Activated T-helper 1 cell treated with anti-CD3 and anti-CD28 coated beads, Interleukin-12 subunit alpha, Interleukin-12 subunit beta, Interleukin-2, Interleukin-4 antibody, amounts not matched to agents 30 ng/mL and 10 ng/mL and 1 ng/mL, durations not matched to agents 14 hours and 24 hours and 36 hours (primary cell): ENCODE measurements at regions of chr11 and their contacts with region 1.

Region 1: DNA sequence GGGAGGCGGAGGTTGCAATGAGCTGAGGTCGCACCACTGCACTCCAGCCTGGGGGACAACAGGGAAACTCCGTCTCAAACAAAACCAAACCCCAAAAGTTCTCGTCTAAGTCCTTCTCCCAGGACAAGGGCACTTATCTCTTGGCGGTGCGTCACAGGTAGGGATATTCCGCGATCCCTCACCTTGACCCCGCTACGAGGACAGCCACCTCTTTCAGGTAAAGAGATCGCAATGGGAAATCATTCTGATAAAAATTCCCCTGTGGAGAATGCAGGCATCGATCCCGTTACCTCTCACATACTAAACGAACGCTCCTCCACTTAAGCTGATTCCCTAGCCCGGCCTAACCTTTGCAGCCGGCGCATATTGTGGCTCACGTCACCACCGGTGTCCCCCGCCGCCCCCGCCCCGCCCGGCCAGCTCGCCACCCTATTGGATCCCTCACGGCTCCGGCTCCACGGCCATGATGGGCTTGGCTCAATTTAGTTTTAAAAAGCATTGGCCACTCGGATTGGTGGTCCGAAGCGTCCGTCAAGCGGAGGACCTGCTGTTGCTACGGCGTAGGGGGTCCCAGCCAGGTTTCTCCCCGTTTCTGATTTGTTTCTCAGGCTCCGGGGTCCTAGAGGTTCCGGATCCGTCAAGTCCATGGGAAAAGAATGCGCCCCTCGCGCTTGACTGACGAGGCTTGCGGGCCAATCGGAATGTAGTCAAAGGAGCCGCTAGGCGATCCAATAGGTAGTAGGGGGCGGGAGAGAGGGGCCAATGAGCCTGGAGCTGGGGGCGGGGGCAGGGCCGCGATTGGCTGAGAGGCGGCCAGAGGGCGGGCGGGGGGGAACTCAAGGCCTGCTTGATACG is 439 bp upstream of the PPP6R3 start:
- DNase-seq: peak; percentile 90
- H3K4me3 Mint-ChIP-seq: peak overlapping the region; percentile 86
- H3K27ac Mint-ChIP-seq: peak overlapping the region; percentile 91
- H3K4me1 Mint-ChIP-seq: peaks cover 29% of the 10 kb centered on the region
- H3K27me3 Mint-ChIP-seq: peaks cover 3% of the 10 kb centered on the region

Region 2: DNA sequence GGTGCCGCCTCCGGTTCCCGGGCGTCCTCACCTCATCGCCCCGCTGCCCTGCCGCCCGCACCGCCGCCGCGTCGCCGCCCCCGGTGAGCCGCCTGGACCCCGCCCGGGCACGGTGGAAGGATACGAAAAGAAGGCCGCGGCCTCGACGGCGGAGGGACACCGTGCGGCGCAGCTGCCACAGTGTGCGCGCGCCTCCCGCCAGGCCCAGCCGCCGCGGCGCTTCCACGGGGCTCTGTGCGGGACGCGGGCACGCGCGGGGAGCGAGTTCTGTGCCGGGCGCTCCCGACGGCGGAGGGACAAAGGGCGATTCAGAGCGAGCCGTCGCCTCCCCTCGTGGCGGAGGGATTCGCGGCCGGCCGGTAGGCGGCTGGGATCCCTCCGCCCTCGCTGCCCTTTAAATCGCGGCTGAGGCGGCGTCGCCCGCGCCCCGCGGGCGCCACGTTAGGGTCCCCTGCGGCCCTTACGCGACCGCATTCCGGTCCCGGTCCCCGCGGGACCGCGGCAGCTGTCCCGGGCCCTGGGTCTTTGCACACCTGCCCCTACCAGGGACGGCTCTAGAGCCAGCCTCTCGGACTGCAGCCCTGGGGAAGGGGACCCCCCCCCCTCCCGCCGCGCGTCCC is 246.4 kb before region 1 on chr11:
- intact Hi-C with region 1: loop called (anchors 5 kb)
- DNase-seq: peak; percentile 76
- H3K4me3 Mint-ChIP-seq: peak overlapping the region; percentile 64
- H3K27ac Mint-ChIP-seq: no peak overlapping the region
- H3K4me1 Mint-ChIP-seq: peaks cover 44% of the 10 kb centered on the region
- H3K27me3 Mint-ChIP-seq: peaks cover 20% of the 10 kb centered on the region

Region 3: DNA sequence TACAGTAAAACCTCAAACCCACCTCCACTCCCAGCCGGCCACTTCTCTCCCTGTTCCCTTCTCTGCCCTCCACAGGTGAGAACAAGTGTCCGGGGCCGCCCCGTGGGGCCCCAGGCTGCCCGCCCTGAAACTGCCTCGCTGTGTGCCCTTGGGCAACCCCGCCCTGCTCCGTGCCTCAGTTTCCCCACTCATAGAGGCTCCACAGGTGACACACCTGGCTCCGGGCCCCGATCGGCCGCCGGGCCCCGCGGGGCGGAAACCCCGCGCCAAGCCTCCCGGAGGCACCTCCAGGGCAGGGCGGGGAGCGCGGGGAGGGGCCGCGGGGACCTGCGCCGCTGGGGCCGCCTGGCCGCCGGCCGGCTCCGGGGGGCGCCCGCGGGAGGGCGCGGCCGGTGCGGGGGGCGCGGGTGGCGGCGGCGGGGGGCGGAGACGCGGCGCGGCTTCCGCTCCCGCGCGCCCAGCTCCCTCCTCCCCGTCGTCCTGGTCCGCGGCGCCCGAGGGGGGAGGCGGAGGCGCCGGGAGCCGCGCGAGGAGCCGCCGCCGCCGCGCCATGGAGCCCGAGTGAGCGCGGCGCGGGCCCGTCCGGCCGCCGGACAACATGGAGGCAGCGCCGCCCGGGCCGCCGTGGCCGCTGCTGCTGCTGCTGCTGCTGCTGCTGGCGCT is 147.9 kb before region 1 on chr11 and contains the start of gene LRP5:
- intact Hi-C with region 1: loop called (anchors 1 kb)
- DNase-seq: no peak
- H3K4me3 Mint-ChIP-seq: peak within 1 kb of the TSS; percentile 87
- H3K27ac Mint-ChIP-seq: peak within 1 kb of the TSS; percentile 79
- H3K4me1 Mint-ChIP-seq: peaks cover 48% of the 10 kb centered on the region
- H3K27me3 Mint-ChIP-seq: peaks cover 7% of the 10 kb centered on the region
- total RNA-seq, gene LRP5: 21.4 and 23.9 TPM in 2 replicates

Region 4: GRCh38 chr11:68338051-68338780 is 121.9 kb before region 1 on chr11:
- intact Hi-C with region 1: no loop called
- DNase-seq: no peak
- H3K4me3 Mint-ChIP-seq: peak overlapping the region; percentile 16
- H3K27ac Mint-ChIP-seq: peak overlapping the region; percentile 5
- H3K4me1 Mint-ChIP-seq: peaks cover 67% of the 10 kb centered on the region
- H3K27me3 Mint-ChIP-seq: no peaks in the 10 kb centered on the region

Region 5: DNA sequence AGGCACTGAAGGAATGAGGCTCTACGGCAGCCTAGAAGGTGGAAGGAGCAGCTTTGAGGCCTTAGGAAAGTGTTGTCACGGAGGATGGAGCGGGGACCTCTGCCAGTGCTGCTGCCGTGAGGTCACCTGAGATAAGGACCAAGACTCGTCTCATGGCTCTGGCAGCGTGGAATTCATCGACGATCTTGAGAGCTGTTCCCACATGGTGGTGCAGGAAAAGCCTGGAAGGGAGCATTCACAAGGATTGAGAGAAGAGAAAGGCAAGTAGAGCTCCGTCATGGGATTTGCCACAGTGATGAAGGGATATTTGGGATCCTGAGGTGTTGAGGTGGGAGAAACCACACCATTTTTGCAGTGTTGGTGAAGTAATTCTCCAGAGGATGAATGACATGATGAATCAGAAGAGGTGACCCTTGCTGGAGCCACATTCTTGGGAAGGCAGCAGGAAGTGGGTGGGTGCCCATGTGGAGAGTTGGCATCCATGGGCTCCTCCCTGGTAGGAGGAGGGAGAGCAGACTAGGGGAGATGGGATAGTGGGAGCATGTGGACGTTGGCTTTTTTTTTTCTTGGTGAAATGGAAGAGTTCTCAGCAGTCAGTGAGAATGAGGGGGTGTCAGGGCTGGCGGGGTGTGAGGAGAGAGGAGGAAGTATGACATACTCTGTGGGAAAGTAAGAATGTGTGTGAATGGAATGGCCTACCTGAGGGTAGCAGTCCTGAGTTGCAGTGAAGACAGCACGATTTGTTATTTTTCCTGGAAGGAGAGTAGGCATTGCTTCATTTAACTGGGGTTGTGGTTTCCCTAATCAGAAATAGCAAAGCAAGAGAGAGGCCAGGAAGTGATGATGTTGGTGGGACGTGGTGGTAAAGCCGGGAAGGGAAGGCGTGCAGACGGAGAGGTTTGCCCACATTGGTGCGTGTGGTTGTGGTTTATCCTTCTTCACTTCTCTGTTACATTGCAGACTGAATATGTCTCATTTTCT is 11.5 kb after region 1 on chr11:
- intact Hi-C with region 1: loop called (anchors 1 kb)
- DNase-seq: peak; percentile 56
- H3K4me3 Mint-ChIP-seq: peak overlapping the region; percentile 71
- H3K27ac Mint-ChIP-seq: peak overlapping the region; percentile 77
- H3K4me1 Mint-ChIP-seq: peaks cover 75% of the 10 kb centered on the region
- H3K27me3 Mint-ChIP-seq: no peaks in the 10 kb centered on the region

Region 6: DNA sequence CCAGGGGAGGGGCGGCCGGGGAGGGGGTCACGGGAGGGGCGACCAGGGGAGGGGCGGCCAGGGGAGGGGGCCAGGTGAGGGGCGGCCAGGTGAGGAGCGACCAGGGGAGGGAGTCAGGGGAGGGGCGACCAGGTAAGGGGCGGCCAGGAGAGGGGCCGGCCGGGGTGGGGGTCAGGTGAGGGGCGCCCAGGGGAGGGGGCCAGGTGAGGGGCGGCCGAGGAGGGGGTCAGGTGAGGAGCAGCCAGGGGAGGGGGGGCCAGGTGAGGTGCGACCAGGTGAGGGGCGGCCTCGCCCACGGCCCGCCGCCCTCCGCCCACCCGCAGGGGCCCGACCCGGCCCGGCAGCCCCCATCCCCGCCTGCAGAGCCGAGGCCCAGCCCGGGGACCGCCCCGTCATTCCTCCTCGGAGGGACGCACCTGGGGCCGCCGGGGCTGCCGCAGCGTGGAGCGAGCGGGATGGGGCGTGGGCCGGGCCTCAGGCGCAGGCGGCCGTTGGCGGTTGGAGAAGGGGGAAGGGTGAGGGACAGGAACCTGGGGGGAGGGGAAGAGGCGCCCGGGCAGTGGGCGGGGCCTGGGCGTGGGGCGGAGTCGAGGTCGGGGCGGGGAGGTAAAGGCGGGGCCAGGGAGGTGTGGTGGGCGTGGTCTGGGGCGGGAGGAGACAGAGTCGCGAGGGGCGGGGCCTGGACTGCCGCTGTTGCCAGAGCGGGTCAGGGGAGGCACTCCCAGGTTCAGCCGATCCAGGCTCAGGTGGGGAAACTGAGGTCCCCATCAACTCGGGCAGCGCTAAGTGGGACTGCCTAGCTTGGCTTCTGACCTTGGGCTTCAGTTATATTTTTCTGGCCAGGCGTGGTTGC is 291.1 kb after region 1 on chr11 and contains the start of gene TESMIN:
- intact Hi-C with region 1: loop called (anchors 2 kb)
- DNase-seq: peak; percentile 83
- H3K4me3 Mint-ChIP-seq: peak within 1 kb of the TSS; percentile 75
- H3K27ac Mint-ChIP-seq: no peak within 1 kb of the TSS
- H3K4me1 Mint-ChIP-seq: no peaks in the 10 kb centered on the region
- H3K27me3 Mint-ChIP-seq: no peaks in the 10 kb centered on the region
- total RNA-seq, gene TESMIN: 1.0 and 2.1 TPM in 2 replicates

Region 7: DNA sequence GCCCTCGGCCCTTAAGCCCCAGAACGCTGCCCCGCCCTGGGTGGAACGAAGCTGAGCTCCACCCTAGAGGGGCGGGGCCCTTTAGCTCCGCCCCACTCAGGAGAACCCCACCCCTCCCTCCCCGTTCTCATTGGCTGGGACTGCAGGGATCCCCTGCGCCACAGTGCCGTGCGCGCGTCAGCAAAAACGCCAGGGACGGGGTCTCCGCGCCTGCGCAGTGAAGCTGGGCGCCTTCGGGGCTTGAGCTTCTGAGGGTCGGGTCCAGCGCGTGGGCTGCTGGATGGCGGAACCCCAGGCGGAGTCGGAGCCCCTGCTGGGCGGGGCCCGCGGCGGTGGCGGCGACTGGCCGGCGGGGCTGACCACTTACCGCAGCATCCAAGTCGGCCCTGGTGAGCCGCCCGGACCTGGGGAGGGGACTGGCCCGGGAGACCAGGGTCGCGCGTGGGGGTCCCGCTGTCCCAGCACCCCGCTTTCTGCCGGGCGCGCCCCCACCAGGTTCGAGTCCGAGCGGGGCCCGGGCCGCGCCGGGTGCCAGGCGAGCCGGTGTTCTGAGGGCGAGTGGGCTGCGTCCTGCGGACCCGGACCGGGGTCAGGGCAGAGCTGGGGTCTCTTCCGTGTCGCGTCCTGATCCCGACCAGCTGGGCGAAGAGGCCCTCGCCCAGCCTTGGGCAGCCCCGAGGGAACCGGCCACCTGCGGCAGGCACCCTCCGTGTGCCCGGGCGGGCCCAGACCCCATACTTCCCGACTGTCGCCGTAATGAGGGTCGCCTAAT is 588.8 kb after region 1 on chr11 and contains the start of gene TPCN2:
- intact Hi-C with region 1: loop called (anchors 5 kb)
- DNase-seq: peak; percentile 91
- H3K4me3 Mint-ChIP-seq: peak within 1 kb of the TSS; percentile 85
- H3K27ac Mint-ChIP-seq: peak within 1 kb of the TSS; percentile 72
- H3K4me1 Mint-ChIP-seq: peaks cover 14% of the 10 kb centered on the region
- H3K27me3 Mint-ChIP-seq: peaks cover 13% of the 10 kb centered on the region
- total RNA-seq, gene TPCN2: 17.4 and 19.2 TPM in 2 replicates